ENCODE measurements at regions of chr4 and their contacts with region 1.

Region 1: DNA sequence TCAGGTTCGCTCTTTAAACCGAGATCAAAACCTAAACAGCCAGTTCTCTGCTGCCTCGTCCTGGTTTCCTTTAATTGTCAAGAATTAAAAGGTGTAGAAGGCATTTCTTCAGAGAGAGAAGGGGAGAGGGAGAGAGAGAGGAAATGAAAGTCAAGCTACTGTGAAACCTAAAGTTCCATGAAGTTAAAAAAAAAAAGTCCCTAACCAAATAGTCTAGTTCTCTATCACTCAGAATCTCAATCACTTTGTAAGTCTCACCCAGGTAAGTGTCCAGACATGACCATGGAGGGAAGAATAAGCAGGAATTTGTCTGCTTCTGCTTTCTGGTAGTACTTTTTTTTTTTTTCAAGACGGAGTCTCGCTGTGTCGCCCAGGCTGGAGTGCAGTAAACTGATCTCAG is 18.8 kb upstream of the SMIM14 start:
- DNase-seq: peak; percentile 67
- ATAC-seq: peak; percentile 88
- H3K4me3 ChIP-seq: no peak overlapping the region
- H3K27ac ChIP-seq: peak overlapping the region; percentile 3; the same call in 1 of the 2 replicates
- H3K4me1 ChIP-seq: peaks cover 31% of the 10 kb centered on the region
- H3K27me3 ChIP-seq: no peaks in the 10 kb centered on the region
- CTCF ChIP-seq: no peak
- EP300 ChIP-seq: peak in 1 of 2 experiments; percentile 76; a peak in 3 of 4 replicates
- POLR2A ChIP-seq: no peak
- RAD21 ChIP-seq: 0 out of 2 replicates have a peak, but pooled peaks have one; percentile 11

Region 2: DNA sequence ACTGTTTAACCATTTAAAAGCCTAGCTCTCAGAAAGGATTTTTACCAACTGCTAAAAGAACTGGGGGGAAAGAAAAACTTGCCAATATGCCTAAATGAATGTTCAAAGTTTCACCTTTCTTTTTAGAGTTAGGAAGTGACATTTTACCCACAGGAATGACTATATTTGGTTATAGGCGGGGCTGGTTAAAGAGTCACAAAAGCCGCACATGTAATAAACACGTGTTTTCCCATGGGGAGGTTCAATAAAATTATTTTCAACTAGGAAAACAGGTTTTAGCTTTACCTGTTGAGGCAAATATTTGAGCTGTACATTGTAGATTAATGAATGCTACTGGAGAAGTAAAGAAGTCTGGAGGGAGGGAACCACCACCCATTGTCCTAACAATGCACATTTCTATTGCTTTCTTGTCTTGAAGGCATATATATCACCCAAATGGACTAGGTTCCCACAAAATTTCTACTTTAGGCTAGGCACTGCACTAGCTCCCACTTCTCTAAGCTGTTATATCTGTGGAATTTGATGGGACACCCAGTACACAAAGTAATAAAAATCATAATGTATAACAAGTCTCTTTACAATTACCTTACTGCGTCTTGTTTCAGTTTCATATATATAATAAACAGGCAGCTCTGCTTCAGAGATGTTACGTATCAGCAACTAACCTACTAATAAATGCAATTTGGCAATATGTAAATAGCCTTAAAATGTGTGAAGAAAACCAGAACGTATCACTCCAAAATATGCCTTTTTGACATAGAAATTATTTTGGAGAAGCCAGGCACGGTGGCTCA is 88.5 kb before region 1 on chr4:
- CTCF ChIA-PET with region 1: no interaction called
- POLR2A ChIA-PET with region 1: no interaction called
- RAD21 ChIA-PET with region 1: interaction called, 10 read pairs
- SMC1A ChIA-PET with region 1: no interaction called
- in situ Hi-C with region 1: no loop called
- intact Hi-C with region 1: no loop called
- DNase-seq: peak; percentile 31
- ATAC-seq: peak; percentile 88
- H3K4me3 ChIP-seq: peak overlapping the region; percentile 8; the same call in 1 of the 2 replicates
- H3K27ac ChIP-seq: peak overlapping the region; percentile 82
- H3K4me1 ChIP-seq: peaks cover 7% of the 10 kb centered on the region
- H3K27me3 ChIP-seq: no peaks in the 10 kb centered on the region
- CTCF ChIP-seq: no peak
- EP300 ChIP-seq: no peak
- POLR2A ChIP-seq: no peak
- RAD21 ChIP-seq: no peak

Region 3: GRCh38 chr4:39609454-39609931 is 48.0 kb before region 1 on chr4:
- CTCF ChIA-PET with region 1: interaction called, 5 read pairs
- POLR2A ChIA-PET with region 1: interaction called, 5 read pairs
- RAD21 ChIA-PET with region 1: interaction called, 10 read pairs
- SMC1A ChIA-PET with region 1: interaction called, 5 read pairs
- in situ Hi-C with region 1: no loop called
- intact Hi-C with region 1: no loop called
- DNase-seq: peak; percentile 96
- ATAC-seq: peak; percentile 91
- H3K4me3 ChIP-seq: 0 out of 2 replicates have a peak overlapping the region, but pooled peaks have one; percentile 39
- H3K27ac ChIP-seq: peak overlapping the region; percentile 80
- H3K4me1 ChIP-seq: peaks cover 49% of the 10 kb centered on the region
- H3K27me3 ChIP-seq: no peaks in the 10 kb centered on the region
- CTCF ChIP-seq: no peak
- EP300 ChIP-seq: peak; percentile 97 to 100
- POLR2A ChIP-seq: 0 out of 2 replicates have a peak, but pooled peaks have one; percentile 29
- RAD21 ChIP-seq: no peak; the same call in 1 of the 2 replicates

Region 4: DNA sequence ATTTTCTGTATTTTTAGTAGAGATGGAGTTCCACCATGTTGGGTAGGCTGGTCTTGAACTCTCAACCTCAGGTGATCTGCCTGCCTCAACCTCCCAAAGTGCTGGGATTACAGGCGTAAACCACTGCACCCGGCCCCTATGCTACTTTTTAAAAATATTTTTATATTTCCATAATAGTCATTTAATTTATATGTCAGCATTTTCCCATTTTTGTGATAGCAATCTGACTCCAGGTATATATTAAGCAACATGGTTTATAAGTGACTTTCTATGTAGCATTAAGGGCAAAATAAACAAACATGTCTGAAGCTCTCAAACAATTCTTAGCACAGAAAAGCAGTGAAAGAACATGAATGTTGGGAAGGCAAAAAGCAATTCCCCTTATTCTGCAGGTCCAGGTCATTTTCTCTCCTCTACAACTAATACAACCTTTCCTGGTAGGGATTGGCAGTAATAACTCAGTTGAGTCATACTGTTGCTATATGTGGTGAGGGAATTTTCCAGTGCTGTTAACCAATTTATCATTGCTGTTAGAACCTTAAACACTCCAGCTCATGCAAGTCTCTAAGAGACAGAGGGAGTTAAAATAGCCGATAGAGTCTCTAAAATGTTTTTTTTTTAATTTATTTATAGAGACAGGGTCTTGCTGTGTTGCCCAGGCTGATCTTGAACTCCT is 42.8 kb before region 1 on chr4:
- CTCF ChIA-PET with region 1: no interaction called
- POLR2A ChIA-PET with region 1: interaction called, 5 read pairs
- RAD21 ChIA-PET with region 1: interaction called, 10 read pairs
- SMC1A ChIA-PET with region 1: interaction called, 10 read pairs
- in situ Hi-C with region 1: no loop called
- intact Hi-C with region 1: no loop called
- DNase-seq: no peak
- ATAC-seq: peak; percentile 50
- H3K4me3 ChIP-seq: peak overlapping the region; percentile 48; the same call in 1 of the 2 replicates
- H3K27ac ChIP-seq: peak overlapping the region; percentile 91
- H3K4me1 ChIP-seq: peaks cover 59% of the 10 kb centered on the region
- H3K27me3 ChIP-seq: no peaks in the 10 kb centered on the region
- CTCF ChIP-seq: no peak
- EP300 ChIP-seq: peak; percentile 53 to 70; a peak in 3 of 4 replicates
- POLR2A ChIP-seq: no peak
- RAD21 ChIP-seq: no peak

Region 5: GRCh38 chr4:39621582-39621981 is 35.9 kb before region 1 on chr4:
- CTCF ChIA-PET with region 1: no interaction called
- POLR2A ChIA-PET with region 1: interaction called, 5 read pairs
- RAD21 ChIA-PET with region 1: interaction called, 8 read pairs
- SMC1A ChIA-PET with region 1: interaction called, 14 read pairs
- in situ Hi-C with region 1: no loop called
- intact Hi-C with region 1: no loop called
- DNase-seq: no peak
- ATAC-seq: no peak
- H3K4me3 ChIP-seq: no peak overlapping the region
- H3K27ac ChIP-seq: no peak overlapping the region
- H3K4me1 ChIP-seq: peaks cover 38% of the 10 kb centered on the region
- H3K27me3 ChIP-seq: no peaks in the 10 kb centered on the region
- CTCF ChIP-seq: no peak
- EP300 ChIP-seq: no peak
- POLR2A ChIP-seq: no peak
- RAD21 ChIP-seq: no peak